ENCODE measurements at regions of chr10 and their contacts with region 1.

Region 1: GRCh38 chr10:103396064-103396788 is at the starts of genes ATP5MK and PDCD11:
- DNase-seq: peak; percentile 99
- H3K4me3 Mint-ChIP-seq: peak within 1 kb of the TSS; percentile 97
- H3K27ac Mint-ChIP-seq: peak within 1 kb of the TSS; percentile 85
- H3K4me1 Mint-ChIP-seq: peaks cover 69% of the 10 kb centered on the region
- H3K27me3 Mint-ChIP-seq: no peaks in the 10 kb centered on the region
- total RNA-seq, gene ATP5MK: 422 to 423 TPM
- total RNA-seq, gene PDCD11: 50.1 TPM

Region 2: DNA sequence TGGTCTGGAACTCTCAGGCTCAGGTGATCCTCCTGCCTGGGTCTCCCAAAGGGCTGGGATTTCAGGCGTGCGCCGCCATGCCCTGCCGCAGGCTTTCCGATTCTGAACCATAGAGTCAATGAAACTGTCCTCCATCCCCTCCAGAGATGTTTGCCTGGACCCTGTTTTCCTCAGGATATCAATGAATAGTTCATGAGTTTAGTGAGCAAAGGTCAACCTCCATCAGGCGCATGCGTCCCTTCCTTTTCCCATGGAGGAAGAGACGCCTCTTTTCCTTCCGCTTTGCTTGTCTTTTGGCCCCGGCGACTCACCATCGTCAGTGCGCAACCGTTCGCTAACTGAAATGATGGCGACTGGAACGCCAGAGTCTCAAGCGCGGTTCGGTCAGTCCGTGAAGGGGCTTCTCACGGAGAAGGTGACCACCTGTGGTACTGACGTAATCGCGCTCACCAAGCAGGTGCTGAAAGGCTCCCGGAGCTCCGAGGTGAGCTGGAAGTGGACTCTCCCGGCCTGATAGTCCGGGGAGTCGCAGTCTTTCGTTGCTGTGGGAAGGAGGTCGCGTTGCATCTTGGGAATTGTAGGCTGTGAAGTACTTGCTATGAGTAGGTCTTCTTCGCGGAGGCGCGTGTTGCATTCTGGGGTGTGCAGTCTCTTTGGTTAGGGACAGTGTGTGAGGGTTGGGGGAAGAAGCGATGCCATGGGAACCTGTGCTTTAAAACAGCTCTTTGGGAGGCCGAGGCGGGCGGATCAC is 542.1 kb before region 1 on chr10 and contains the start of gene BORCS7:
- CTCF ChIA-PET with region 1: no interaction called
- intact Hi-C with region 1: loop called (anchors 1 kb)
- DNase-seq: peak; percentile 95
- H3K4me3 Mint-ChIP-seq: peak within 1 kb of the TSS; percentile 95
- H3K27ac Mint-ChIP-seq: peak within 1 kb of the TSS; percentile 97
- H3K4me1 Mint-ChIP-seq: peaks cover 17% of the 10 kb centered on the region
- H3K27me3 Mint-ChIP-seq: no peaks in the 10 kb centered on the region
- total RNA-seq, gene BORCS7: 5.6 to 5.8 TPM

Region 3: DNA sequence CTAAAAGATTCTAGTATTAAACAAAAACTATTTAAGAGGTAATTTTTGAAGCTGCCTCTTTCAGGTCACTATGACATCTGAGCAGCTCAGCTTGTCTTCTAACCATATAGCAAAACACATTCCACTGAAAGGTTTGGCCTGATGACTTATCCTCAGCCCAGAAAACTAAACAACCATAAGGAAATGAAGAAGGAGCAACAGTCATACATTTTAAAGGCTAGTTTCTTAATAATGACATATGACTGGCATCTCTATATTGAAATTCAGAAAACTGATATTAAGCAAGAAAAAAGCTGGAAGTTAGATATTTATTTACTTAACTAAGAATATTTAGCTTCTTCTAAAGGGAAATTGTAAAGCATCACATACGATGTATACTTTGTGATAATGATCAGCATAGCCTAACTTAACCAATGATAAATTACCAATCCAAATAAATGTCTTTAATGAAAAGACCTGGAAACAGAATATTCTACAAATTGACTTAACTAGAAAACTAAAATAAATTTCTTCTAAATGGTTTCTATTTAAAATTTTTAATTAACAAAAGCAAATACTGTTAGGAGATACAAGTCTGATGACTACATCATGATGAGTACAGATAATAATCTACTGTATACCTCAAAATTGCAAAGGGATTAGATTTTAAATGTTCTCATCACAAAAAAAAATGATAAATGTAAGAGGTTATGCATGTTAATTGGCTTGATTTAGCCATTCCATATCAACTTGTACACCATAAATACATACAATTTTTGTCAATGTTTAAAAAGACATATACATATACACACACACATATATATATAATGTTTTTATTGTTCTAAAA is 227.5 kb before region 1 on chr10:
- CTCF ChIA-PET with region 1: no interaction called
- intact Hi-C with region 1: no loop called
- DNase-seq: no peak
- H3K4me3 Mint-ChIP-seq: no peak overlapping the region
- H3K27ac Mint-ChIP-seq: no peak overlapping the region
- H3K4me1 Mint-ChIP-seq: peaks cover 3% of the 10 kb centered on the region
- H3K27me3 Mint-ChIP-seq: no peaks in the 10 kb centered on the region

Region 4: GRCh38 chr10:103350501-103351260 is 45.5 kb before region 1 on chr10 and contains the start of gene PCGF6:
- CTCF ChIA-PET with region 1: no interaction called
- intact Hi-C with region 1: loop called (anchors 2 kb)
- DNase-seq: peak; percentile 70
- H3K4me3 Mint-ChIP-seq: peak within 1 kb of the TSS; percentile 90
- H3K27ac Mint-ChIP-seq: peak within 1 kb of the TSS; percentile 86
- H3K4me1 Mint-ChIP-seq: peaks cover 12% of the 10 kb centered on the region
- H3K27me3 Mint-ChIP-seq: no peaks in the 10 kb centered on the region
- total RNA-seq, gene PCGF6: 10.6 to 10.7 TPM

Region 5: DNA sequence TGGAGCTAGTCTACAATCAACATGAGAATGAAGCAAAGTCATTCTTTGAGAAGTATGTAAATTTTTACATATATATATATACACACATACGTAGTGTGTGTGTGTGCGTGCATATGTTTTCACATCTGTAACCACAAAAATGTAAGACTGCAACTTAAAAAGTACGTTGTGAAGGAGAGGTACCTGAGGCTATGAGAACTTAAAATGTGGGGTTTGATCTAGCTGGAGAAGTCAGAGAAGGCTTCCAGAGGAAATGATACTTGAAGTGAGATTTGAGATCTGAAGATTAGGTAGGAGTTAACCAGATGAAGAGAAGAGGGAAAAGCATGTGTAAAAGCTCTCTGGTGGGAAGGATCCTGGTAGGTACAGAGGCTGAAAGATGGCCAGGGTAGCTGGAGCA is 22.7 kb before region 1 on chr10:
- CTCF ChIA-PET with region 1: no interaction called
- intact Hi-C with region 1: loop called (anchors 1 kb)
- DNase-seq: no peak
- H3K4me3 Mint-ChIP-seq: no peak overlapping the region
- H3K27ac Mint-ChIP-seq: peak overlapping the region; percentile 50
- H3K4me1 Mint-ChIP-seq: peaks cover 28% of the 10 kb centered on the region
- H3K27me3 Mint-ChIP-seq: no peaks in the 10 kb centered on the region

Region 6: DNA sequence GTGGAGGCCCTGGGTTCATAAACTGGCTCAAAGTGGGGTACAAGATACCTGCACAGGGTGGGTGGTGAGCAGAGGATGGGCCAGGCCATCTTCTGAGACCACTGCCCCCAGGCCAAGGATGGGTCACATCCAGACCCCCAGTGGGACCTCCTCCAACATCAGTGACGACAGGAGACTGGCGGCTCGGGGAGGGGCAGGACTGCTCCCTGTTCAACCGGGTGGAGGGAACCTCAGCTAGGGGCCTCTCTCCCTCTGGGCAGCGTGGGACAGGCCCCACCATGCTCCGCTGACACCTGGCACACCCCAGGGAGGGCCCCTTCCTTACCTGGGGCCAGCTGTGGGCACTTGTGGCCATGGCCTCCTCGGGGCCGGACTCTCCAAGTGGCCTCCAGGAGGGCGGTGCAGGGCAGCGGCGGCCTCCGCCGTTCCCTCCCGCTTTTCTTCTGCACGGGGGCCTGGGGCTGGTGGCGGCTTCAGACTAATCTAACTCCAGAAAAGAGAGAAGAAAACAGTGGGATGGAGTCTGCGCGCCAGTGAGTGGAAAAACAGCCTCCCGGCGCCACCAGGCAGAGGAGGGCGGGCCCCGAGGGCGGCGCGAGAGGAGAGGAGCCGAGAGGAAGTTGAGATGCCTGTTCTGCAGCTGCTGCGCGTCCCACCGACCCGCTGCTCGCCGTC is 55.7 kb after region 1 on chr10 and contains the start of gene CALHM2:
- CTCF ChIA-PET with region 1: no interaction called
- intact Hi-C with region 1: loop called (anchors 2 kb)
- DNase-seq: peak; percentile 73
- H3K4me3 Mint-ChIP-seq: peak within 1 kb of the TSS; percentile 80
- H3K27ac Mint-ChIP-seq: no peak within 1 kb of the TSS
- H3K4me1 Mint-ChIP-seq: peaks cover 35% of the 10 kb centered on the region
- H3K27me3 Mint-ChIP-seq: no peaks in the 10 kb centered on the region
- total RNA-seq, gene CALHM2: 8.3 to 9.5 TPM

Measured in activated naive CD4-positive, alpha-beta T cell treated with anti-CD3 and anti-CD28 coated beads for 36 hours (primary cell).